Naive thymus-derived CD4-positive, alpha-beta T cell (primary cell): ENCODE measurements at regions of chr14 and their contacts with region 1.

Region 1: DNA sequence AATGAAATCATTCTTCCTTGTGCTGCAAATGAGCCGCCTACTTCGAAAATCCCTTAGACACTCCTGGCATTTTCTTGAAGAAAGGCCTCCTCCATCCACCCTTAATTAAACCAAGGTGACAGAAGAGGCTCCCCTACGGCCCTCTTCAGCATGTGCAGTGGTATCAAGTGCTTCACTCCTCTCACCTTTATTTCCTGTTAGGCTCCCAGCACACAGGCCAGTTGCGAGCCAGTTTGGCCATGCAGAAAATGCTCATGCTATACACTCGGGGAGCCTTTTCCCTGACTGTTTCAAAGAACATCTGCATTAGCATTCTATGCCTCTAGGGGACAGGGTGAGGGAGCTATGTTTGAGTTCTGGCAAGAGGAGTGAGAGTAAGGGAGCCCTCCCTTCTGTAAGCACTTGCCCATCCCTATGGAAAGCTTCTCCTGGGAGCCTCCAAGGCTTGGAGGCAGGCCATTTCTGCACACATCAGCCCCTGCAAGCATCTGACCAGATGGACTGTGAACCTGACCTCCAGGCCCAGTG is 291.5 kb downstream of the RPS29 start:
- DNase-seq: no peak
- ATAC-seq: no peak
- H3K4me3 ChIP-seq: no peak overlapping the region
- H3K4me3 Mint-ChIP-seq: no peak overlapping the region
- H3K27ac ChIP-seq: no peak overlapping the region
- H3K27ac Mint-ChIP-seq: no peak overlapping the region
- H3K4me1 ChIP-seq: no peaks in the 10 kb centered on the region
- H3K4me1 Mint-ChIP-seq: no peaks in the 10 kb centered on the region
- H3K27me3 ChIP-seq: no peaks in the 10 kb centered on the region
- H3K27me3 Mint-ChIP-seq: peaks cover 0 to 16% (median 8%) of the 10 kb centered on the region in 5 donors

Region 2: DNA sequence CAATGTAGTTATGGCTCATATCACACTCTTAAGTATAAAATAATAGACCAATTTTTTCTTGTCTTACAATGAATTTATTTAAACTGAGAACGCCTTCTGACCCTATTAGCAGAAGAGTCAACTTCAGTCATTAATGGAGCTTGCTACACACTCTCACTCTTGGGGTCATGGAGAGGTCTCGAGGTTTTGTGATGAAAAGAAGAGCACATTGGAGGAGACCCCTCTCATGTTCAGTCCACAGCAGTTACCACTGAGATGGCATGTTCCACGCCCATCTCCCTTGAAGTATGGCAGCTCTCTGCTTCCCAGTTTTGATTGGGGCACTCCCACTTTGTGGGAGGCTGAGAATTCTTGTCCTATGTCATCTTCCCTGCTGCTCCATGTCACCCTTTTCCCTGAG is 25.1 kb after region 1 on chr14:
- CTCF ChIA-PET with region 1: no interaction called
- POLR2A ChIA-PET with region 1: no interaction called
- intact Hi-C with region 1: loop called in 1 of 2 experiments (anchors 1 kb)
- DNase-seq: no peak
- ATAC-seq: no peak
- H3K4me3 ChIP-seq: no peak overlapping the region
- H3K4me3 Mint-ChIP-seq: no peak overlapping the region
- H3K27ac ChIP-seq: no peak overlapping the region
- H3K27ac Mint-ChIP-seq: no peak overlapping the region
- H3K4me1 ChIP-seq: no peaks in the 10 kb centered on the region
- H3K4me1 Mint-ChIP-seq: peaks cover 0 to 2% (median 0%) of the 10 kb centered on the region in 7 donors
- H3K27me3 ChIP-seq: no peaks in the 10 kb centered on the region
- H3K27me3 Mint-ChIP-seq: peaks cover 4 to 25% (median 20%) of the 10 kb centered on the region in 5 donors